Posterior cingulate gyrus (tissue), 11 donors: ENCODE measurements at regions of chr12 and their contacts with region 1.

Region 1: DNA sequence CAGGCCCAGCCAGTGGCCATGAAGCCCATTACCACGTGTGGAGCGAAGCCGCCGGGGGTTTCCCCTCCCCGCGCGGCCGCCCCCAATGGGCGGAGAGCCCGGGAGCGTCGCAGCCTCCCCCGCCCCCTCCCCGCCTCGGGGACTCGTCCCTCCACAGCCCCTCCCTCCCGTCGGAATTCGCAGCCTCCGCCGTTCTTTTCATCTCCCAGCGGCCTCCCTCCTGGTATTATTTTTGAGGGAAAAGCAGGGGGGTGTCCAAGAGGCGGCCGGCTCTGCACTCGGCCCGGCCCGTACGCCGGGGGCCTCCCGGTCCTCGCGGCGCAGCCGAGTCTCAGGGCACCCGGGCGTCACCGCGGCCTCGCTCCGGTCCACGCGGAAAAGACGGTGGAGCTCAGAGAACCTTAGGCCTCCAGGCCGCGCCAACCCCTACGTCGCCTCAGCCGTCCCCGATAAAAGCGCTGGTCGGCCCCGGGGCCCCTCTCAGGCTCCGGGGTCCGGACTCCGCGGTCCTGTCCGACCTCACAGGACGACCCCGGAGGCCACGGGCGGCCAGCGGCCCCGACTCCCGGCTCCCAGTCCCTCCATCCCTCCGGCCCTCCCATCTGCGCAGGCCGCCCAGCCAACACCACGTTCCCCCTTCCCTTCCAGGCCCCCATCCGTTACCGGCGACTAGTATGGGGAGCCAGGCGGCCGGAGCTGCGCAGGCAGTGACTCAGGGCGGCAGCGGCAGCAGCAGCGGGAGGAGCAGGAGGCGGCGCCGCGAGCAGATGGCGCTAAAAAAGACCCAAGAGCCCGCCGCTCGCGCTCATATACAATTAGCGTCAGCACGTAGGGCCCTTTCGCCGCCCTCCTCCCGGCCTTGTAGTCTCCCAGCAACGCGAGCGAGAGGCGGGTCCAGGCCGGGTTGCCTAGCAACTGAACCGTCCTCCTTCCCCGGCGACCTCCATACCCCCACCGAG is at the start of gene NAP1L1:
- DNase-seq: peak; percentile 95 to 100 (median 98)

Region 2: DNA sequence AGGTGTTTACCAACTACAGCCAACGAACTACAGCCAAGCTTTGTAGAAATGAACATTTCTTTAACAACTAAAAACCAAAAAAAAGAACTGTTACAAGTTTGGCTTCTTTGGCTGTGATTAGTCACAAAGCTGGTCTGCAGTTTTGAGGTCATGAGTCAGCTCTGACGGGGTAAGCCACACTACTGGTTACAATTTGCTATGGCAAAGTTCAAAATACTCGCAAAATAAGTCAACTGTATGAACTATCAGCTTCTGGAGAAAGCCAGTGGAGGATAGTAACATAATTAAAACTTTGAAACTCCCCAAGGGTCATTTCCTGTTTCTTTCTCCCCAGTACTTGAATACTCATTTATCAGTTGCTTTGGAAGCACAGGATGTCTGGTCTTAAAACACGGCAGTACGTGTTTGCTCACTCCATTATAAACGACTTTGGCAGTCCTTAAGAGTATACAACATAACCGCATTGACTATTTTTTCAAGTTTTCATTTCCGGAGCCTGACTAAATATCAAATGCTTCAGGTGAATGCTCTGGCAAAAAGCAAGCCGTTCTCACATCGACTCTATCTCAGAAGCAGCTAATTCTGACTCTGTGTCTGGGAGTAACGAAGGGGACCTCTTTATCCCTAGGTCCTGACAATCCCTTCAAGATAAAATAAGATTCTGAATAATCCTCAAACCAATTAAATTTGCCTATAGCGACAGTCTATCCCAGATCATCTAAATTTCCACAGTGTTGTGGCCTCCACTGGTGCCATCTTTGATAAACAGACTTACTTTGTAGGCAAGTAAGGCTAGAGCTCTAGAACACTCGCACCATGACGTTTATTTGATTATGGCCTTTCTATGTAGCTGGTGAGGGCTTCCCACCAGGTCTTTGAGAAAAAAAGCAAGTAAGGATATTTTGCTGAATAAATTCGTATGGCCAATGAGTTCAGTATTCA is 63.2 kb before region 1 on chr12:
- intact Hi-C with region 1: no loop called
- DNase-seq: no peak

Region 3: GRCh38 chr12:76031537-76032073 is 52.6 kb before region 1 on chr12 and contains the start of gene PHLDA1:
- intact Hi-C with region 1: loop called (anchors 5 kb)
- DNase-seq: peak; percentile 84 to 98 (median 94)

Region 4: GRCh38 chr12:76158518-76159321 is 74.5 kb after region 1 on chr12:
- intact Hi-C with region 1: loop called (anchors 10 kb)
- DNase-seq: peak in 4 of 10 donors; percentile 19 to 44 (median 40)